ENCODE measurements at regions of chr1 and their contacts with region 1.

Region 1: DNA sequence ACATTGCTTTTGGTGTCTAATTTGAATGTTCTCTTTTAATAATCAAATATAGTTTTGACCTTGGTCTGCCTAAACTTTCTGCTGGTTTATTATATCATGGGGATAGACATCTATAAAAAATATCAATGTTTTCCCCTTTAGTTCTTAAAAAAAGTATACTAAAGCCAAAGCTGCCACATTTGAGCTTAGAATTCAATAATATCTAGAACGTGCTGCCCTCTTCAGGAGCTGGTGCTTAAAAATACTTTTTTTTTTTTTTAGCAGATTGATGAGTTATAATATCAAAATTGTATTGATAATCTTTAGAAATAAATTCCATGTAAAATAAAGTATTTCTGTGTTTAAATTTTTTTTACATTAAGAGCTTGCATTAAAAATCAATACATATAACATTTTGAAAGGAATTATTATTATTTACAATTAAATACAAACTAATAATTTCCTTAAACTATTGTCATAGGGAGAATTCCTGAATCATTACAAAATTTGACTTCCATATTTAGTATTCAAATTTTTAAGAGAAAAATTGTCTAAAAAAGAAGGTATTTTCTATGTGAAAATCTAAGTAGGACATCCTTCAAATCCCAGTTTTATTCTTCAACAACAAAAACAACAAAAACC is 40.1 kb upstream of the ADGRL2 start:
- DNase-seq: no peak
- ATAC-seq: no peak
- H3K4me3 ChIP-seq: no peak overlapping the region
- H3K27ac ChIP-seq: no peak overlapping the region
- H3K4me1 ChIP-seq: no peaks in the 10 kb centered on the region
- H3K27me3 ChIP-seq: no peaks in the 10 kb centered on the region
- CTCF ChIP-seq: no peak
- POLR2A ChIP-seq: no peak

Region 2: GRCh38 chr1:81414488-81415015 is 346.0 kb before region 1 on chr1:
- in situ Hi-C with region 1: loop called in 1 of 4 experiments (anchors 25 kb)
- intact Hi-C with region 1: no loop called
- DNase-seq: peak; percentile 15 to 41
- ATAC-seq: peak; percentile 55 to 60
- H3K4me3 ChIP-seq: no peak overlapping the region
- H3K27ac ChIP-seq: no peak overlapping the region
- H3K4me1 ChIP-seq: peaks cover 4 to 5% of the 10 kb centered on the region in 2 donors
- H3K27me3 ChIP-seq: no peaks in the 10 kb centered on the region
- CTCF ChIP-seq: peak in 4 of 5 experiments; percentile 31 to 60 (median 52)
- POLR2A ChIP-seq: no peak

Region 3: GRCh38 chr1:81689531-81689941 is 71.1 kb before region 1 on chr1:
- in situ Hi-C with region 1: no loop called
- intact Hi-C with region 1: no loop called
- DNase-seq: no peak
- ATAC-seq: peak; percentile 36 to 72
- H3K4me3 ChIP-seq: no peak overlapping the region
- H3K27ac ChIP-seq: peak overlapping the region in 1 of 4 donors; percentile 30
- H3K4me1 ChIP-seq: no peaks in the 10 kb centered on the region
- H3K27me3 ChIP-seq: no peaks in the 10 kb centered on the region
- CTCF ChIP-seq: no peak
- POLR2A ChIP-seq: no peak

Region 4: GRCh38 chr1:81867235-81867634 is 106.6 kb after region 1 on chr1:
- in situ Hi-C with region 1: no loop called
- intact Hi-C with region 1: no loop called
- DNase-seq: no peak
- ATAC-seq: no peak
- H3K4me3 ChIP-seq: no peak overlapping the region
- H3K27ac ChIP-seq: no peak overlapping the region
- H3K4me1 ChIP-seq: peaks cover 0 to 3% of the 10 kb centered on the region in 2 donors
- H3K27me3 ChIP-seq: no peaks in the 10 kb centered on the region
- CTCF ChIP-seq: no peak
- POLR2A ChIP-seq: no peak